CD4-positive, alpha-beta memory T cell (primary cell): ENCODE measurements at regions of chr19 and their contacts with region 1.

Region 1: DNA sequence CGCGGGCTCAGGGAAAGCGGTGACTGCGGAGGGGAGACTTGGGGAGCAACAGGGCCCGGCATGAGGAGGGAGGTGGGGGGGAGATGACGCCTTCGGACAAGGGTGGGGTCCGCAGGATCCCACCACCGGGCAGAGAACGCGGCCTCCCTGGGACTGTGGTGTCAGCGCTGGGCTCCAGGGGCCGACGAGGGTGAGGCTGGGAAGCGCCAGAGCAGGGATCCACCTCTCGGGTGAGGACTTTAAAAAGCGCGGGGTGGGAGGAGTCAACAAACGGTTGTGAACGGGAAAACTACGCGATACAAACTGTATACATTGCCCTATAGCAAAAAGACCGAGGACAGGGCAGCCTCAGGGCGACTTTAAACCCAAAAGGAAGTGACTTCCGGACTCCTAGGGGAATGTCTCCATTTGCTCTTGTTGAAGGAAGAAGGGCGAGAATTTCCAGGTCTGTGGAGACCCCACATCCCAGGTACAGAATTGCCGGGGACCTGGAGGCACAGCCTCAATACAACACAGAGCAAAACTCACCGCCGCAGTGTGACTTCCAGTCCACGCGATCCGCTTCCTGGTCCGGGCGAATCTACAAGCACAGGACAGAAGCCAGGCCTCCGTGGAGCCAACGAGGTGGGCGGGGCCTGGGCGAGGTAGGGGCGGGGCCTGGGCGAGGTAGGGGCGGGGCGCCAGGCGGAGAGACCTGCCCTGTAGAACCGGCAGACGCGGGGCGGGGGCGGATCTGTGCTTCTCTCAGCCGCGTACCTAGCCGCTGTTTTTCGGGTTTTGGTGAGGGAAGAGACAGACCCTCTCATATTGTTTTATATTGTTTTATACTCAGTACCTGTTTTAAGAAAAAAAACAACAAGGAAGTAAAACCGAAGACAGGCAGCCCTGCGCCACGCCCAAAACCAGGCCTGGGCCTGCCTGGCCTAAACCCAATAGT is at the start of gene ZNF888:
- DNase-seq: peak; percentile 77 to 88 (median 80)
- H3K4me3 ChIP-seq: peak within 1 kb of the TSS; percentile 58 to 85
- H3K4me3 Mint-ChIP-seq: peak within 1 kb of the TSS; percentile 87 to 99 (median 94)
- H3K27ac ChIP-seq: peak within 1 kb of the TSS; percentile 61
- H3K27ac Mint-ChIP-seq: peak within 1 kb of the TSS; percentile 88 to 95 (median 93)
- H3K4me1 ChIP-seq: peaks cover 14% of the 10 kb centered on the region
- H3K4me1 Mint-ChIP-seq: peaks cover 14 to 34% (median 25%) of the 10 kb centered on the region in 4 donors
- H3K27me3 ChIP-seq: no peaks in the 10 kb centered on the region
- H3K27me3 Mint-ChIP-seq: peaks cover 0 to 6% of the 10 kb centered on the region in 2 donors
- total RNA-seq, gene ZNF888: 10.7 to 11.4 TPM

Region 2: GRCh38 chr19:52897144-52897935 is 25.8 kb before region 1 on chr19 and contains the start of gene ZNF320:
- CTCF ChIA-PET with region 1: no interaction called
- POLR2A ChIA-PET with region 1: interaction called, 3 read pairs
- intact Hi-C with region 1: loop called (anchors 2 kb)
- DNase-seq: peak; percentile 88 to 92 (median 89)
- H3K4me3 ChIP-seq: peak within 1 kb of the TSS; percentile 77 to 95
- H3K4me3 Mint-ChIP-seq: peak within 1 kb of the TSS; percentile 90 to 96 (median 94)
- H3K27ac ChIP-seq: peak within 1 kb of the TSS; percentile 69
- H3K27ac Mint-ChIP-seq: peak within 1 kb of the TSS; percentile 83 to 97 (median 94)
- H3K4me1 ChIP-seq: peaks cover 14% of the 10 kb centered on the region
- H3K4me1 Mint-ChIP-seq: peaks cover 3 to 24% (median 22%) of the 10 kb centered on the region in 4 donors
- H3K27me3 ChIP-seq: no peaks in the 10 kb centered on the region
- H3K27me3 Mint-ChIP-seq: no peaks in the 10 kb centered on the region
- total RNA-seq, gene ZNF320: 14.1 to 15.6 TPM

Region 3: DNA sequence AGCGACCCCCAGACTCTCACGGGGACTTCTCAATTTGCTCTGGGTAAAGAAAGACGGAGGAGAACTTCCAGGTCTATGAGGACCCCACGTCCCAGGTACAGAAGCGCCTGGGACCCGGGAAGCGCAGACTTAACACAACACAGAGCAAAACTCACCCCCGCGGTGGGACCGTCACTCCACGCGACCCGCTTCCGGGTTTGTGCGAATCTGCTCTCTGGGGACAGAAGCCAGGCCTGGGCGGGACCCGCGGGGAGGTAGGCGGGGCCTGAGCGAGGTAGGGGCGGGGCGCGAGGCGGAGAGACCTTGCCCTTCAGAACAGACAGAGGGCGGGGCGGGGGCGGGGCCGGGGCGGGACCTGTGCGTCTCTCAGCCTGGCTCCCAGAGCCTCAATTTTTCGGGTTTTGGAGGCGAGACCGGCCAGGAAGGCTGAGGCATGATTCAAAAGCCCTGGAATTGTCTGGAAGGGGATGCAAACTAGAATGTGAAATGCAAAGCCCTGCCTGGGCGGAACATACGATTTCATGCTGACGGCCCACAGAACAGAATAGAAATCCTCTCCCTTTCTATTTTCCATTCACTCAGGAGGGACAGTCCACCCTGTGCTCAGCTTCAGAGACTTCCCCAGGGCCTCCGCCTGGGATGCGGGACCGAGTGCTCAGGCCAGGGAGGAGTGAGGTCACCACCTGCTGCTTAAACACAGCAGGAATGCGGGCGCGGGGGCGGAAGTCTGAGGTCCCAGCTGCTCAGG is 19.5 kb after region 1 on chr19:
- CTCF ChIA-PET with region 1: no interaction called
- POLR2A ChIA-PET with region 1: no interaction called
- intact Hi-C with region 1: loop called (anchors 2 kb)
- DNase-seq: peak; percentile 95 to 98 (median 97)
- H3K4me3 ChIP-seq: peak overlapping the region; percentile 68 to 84
- H3K4me3 Mint-ChIP-seq: peak overlapping the region; percentile 88 to 98 (median 96)
- H3K27ac ChIP-seq: peak overlapping the region; percentile 72
- H3K27ac Mint-ChIP-seq: peak overlapping the region; percentile 91 to 98 (median 95)
- H3K4me1 ChIP-seq: peaks cover 17% of the 10 kb centered on the region
- H3K4me1 Mint-ChIP-seq: peaks cover 10 to 32% (median 24%) of the 10 kb centered on the region in 4 donors
- H3K27me3 ChIP-seq: no peaks in the 10 kb centered on the region
- H3K27me3 Mint-ChIP-seq: no peaks in the 10 kb centered on the region

Region 4: DNA sequence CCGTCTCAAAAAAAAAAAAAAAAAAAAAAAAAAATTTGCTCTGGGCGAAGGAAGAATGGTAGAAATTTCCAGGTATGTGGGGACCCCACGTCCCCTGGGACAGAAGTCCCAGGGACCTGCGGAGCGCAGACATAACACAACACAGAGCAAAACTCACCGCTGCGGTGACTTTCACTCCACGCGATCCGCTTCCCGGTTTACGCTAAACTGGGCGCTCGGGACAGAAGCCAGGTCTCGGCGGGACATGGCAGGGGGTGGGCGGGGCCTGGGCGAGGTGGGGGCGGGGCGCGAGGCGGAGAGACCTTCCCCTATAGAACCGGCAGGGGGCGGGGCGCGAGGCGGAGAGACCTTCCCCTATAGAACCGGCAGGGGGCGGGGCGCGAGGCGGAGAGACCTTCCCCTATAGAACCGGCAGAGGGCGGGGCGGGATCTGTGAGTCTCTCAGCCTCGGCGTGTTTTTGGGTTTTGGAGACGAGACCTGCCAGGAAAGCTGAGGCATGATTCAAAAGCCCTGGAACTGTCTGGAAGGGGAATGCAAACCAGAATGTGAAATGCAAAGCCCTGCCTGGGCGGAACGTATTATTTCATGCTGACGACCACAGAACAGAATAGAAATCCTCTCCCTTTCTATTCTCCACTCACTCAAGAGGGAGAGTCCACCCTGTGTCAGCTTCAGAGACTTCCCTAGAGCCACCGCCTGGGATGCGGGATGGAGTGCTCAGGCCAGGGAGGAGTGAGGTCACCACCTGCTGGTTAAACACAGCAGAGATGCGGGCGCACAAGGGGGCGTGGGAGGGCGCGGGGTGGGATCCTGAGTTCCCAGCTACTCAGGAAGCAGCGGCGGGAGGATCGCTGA is 70.4 kb after region 1 on chr19:
- CTCF ChIA-PET with region 1: no interaction called
- POLR2A ChIA-PET with region 1: no interaction called
- intact Hi-C with region 1: loop called (anchors 5 kb)
- DNase-seq: peak; percentile 77 to 90 (median 83)
- H3K4me3 ChIP-seq: peak overlapping the region; percentile 49 to 81
- H3K4me3 Mint-ChIP-seq: peak overlapping the region; percentile 69 to 96 (median 90)
- H3K27ac ChIP-seq: no peak overlapping the region
- H3K27ac Mint-ChIP-seq: peak overlapping the region in 6 of 7 donors; percentile 27 to 86 (median 68)
- H3K4me1 ChIP-seq: peaks cover 14% of the 10 kb centered on the region
- H3K4me1 Mint-ChIP-seq: peaks cover 3 to 23% (median 18%) of the 10 kb centered on the region in 4 donors
- H3K27me3 ChIP-seq: no peaks in the 10 kb centered on the region
- H3K27me3 Mint-ChIP-seq: peaks cover 5 to 9% of the 10 kb centered on the region in 2 donors